ENCODE measurements at regions of chr7 and their contacts with region 1.

Region 1: DNA sequence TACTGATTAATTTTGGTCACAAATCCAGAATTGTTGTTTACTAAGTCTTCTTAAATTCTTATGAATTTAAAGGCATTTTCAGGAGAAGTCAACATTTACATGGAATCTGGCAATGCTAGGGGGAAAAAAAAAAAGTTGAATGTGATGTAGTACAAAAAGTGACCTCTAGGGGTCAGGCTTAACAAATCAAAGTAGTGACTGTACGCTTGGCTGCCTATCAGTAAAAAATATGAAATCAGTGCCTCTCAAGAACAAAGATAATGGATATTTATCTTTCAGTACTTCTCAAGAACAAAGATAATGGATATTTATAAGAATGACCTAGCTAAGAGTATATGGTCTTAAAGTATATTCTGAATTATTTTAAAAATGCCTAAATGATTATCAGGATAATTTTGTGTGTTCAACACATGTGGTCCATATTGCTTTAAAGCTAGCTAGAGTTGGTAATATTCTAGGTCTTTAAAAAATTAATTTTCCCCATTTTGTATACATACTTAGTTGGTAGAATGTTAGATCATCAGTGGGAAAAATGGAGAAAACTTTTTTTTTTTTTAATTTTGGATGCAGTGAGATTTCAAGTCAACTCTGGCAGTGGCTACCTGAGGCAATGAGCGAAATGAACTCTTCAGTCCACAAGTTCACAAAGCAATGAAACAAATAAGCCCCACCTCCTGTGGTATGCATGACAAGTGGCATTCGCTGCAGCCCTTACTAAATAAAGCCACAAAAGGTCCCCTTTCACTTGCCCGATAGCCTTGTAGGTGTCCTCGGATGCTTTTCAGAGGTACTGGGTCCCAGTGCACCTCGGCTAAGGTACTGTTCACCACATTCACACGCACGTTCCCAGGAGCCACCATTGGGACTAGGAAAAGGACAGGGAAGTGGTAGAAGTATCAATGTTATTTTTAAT is 51.2 kb upstream of the LAMB4 start:
- DNase-seq: no peak
- ATAC-seq: peak in 1 of 2 donors; percentile 32
- H3K4me3 ChIP-seq: no peak overlapping the region
- H3K27ac ChIP-seq: no peak overlapping the region
- H3K4me1 ChIP-seq: no peaks in the 10 kb centered on the region
- H3K27me3 ChIP-seq: no peaks in the 10 kb centered on the region

Region 2: DNA sequence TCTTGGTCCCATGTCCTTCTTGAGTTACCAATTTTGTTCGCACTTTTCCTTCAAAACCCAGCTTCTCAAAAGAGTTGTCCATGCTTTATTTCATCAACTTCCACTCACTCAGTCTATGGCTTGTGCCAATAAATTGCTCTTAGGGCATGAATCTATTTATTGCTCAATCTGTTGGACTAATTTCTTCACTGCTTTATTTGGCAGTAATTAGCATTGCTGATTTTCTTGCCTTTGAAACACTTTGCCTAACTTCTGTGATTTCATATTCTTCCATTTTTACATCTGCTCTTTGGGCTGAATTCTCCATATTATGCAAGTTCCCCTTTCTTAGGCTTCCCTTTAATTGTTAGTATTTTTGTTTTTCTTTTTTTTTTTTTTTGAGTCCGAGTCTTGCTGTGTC is 273.5 kb before region 1 on chr7:
- intact Hi-C with region 1: no loop called
- DNase-seq: no peak
- ATAC-seq: peak; percentile 69 to 80
- H3K4me3 ChIP-seq: no peak overlapping the region
- H3K27ac ChIP-seq: no peak overlapping the region
- H3K4me1 ChIP-seq: no peaks in the 10 kb centered on the region
- H3K27me3 ChIP-seq: no peaks in the 10 kb centered on the region

Region 3: GRCh38 chr7:108459931-108460551 is 278.7 kb after region 1 on chr7:
- intact Hi-C with region 1: loop called in 3 of 4 experiments (anchors 5 to 10 kb)
- DNase-seq: no peak
- ATAC-seq: no peak
- H3K4me3 ChIP-seq: no peak overlapping the region
- H3K27ac ChIP-seq: no peak overlapping the region
- H3K4me1 ChIP-seq: no peaks in the 10 kb centered on the region
- H3K27me3 ChIP-seq: peaks cover 3% of the 10 kb centered on the region

Region 4: GRCh38 chr7:108497082-108497725 is 315.9 kb after region 1 on chr7:
- intact Hi-C with region 1: loop called in 3 of 4 experiments (anchors 5 to 10 kb)
- DNase-seq: no peak
- ATAC-seq: peak in 1 of 2 donors; percentile 51
- H3K4me3 ChIP-seq: no peak overlapping the region
- H3K27ac ChIP-seq: no peak overlapping the region
- H3K4me1 ChIP-seq: no peaks in the 10 kb centered on the region
- H3K27me3 ChIP-seq: no peaks in the 10 kb centered on the region